ENCODE measurements at regions of chr1 and their contacts with region 1.

Region 1: DNA sequence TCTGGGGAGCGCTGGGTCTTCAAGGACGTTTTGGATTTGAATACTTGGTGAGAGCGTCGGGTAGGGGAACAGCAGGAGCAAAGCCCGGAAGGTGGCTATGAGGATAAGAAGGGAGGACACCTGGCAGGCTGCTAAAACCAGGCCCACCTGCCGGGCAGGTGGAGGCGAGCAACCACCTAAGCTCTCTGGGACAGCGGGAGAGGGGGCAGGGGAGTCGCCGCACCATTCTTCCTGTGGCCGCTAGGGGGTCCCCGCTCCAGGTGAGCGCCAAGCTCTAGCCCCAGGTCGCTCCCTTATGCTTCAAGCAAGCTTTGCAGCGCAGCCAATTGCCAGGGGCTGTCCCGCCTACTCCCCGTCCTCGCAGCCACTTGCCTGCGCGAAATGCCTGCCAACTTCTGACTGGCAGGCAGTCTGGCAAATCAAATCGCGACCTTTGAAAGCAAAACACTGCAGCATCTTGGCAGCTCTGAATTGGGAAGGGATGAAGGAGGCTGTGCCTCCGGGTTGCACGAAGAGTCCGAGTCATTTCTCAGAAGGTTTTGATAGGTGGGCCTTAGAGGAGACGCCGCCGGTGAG is at the start of gene NIPAL3:
- DNase-seq: peak; percentile 99
- H3K4me3 Mint-ChIP-seq: peak within 1 kb of the TSS; percentile 98
- H3K27ac Mint-ChIP-seq: peak within 1 kb of the TSS; percentile 77
- H3K4me1 Mint-ChIP-seq: peaks cover 61% of the 10 kb centered on the region
- H3K27me3 Mint-ChIP-seq: no peaks in the 10 kb centered on the region
- total RNA-seq, gene NIPAL3: 51.8 to 53.5 TPM

Region 2: DNA sequence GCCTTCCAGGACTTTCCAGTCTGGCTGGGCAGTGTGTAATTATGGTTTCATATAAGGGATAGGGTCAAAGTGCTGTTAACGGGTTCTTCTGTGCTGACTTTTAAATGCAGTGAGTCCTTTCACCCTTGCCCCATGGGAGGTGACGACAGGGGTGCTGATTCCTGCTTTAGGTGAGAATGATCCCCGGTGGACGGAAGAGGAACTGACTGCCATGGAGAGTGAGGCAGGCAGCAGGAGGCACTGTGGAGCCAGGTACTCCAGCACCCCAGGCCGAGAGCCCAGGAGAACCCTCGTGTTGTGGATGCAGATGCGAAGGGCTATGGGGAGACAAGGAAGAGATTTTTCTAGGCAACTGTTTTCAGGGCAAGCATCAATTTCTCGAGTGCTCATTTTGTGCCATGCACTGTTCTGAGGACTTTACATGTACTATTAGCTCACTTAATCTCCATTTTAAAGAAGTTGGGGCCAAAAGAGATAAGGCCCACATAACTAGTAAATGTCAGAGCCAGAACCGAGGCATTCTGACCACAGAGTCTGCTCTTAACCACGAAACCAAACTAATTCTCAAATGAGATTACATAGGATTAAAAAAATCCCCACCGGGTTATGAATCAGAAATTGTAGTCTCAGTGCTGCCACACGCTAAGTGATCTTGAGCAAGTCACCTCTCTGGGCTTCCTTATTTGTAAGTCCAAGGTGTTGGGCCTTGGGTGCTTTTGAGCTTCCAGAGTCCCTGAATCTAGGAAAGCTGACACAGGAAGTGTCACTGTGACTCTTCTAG is 30.1 kb before region 1 on chr1:
- CTCF ChIA-PET with region 1: interaction called, 50 read pairs
- POLR2A ChIA-PET with region 1: no interaction called
- DNase-seq: peak; percentile 49
- H3K4me3 Mint-ChIP-seq: no peak overlapping the region
- H3K27ac Mint-ChIP-seq: peak overlapping the region; percentile 82
- H3K4me1 Mint-ChIP-seq: peaks cover 36% of the 10 kb centered on the region
- H3K27me3 Mint-ChIP-seq: no peaks in the 10 kb centered on the region

Region 3: DNA sequence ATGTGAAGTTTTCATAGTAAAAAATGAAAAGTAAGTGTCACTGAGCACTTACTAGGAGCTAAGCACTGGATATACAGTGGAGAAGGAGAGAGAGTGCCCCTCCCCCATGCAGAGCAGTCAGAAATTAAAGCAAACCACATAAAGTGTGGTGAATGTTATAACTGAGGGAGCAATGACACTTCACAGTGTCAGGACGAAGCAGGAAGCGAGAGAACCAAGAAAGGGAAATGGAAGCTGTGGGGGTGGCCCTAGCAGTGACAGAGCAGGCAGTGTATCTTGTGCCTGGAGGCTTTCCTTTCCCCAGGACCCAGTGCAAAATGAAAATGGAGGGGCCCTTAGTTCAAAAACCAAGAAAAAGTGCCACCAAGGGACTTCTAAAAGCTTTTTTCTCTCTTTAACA is 65.7 kb after region 1 on chr1:
- CTCF ChIA-PET with region 1: interaction called, 19 read pairs
- POLR2A ChIA-PET with region 1: interaction called, 95 read pairs
- DNase-seq: peak; percentile 65
- H3K4me3 Mint-ChIP-seq: peak overlapping the region; percentile 27
- H3K27ac Mint-ChIP-seq: peak overlapping the region; percentile 99
- H3K4me1 Mint-ChIP-seq: peaks cover 50% of the 10 kb centered on the region
- H3K27me3 Mint-ChIP-seq: no peaks in the 10 kb centered on the region

Region 4: DNA sequence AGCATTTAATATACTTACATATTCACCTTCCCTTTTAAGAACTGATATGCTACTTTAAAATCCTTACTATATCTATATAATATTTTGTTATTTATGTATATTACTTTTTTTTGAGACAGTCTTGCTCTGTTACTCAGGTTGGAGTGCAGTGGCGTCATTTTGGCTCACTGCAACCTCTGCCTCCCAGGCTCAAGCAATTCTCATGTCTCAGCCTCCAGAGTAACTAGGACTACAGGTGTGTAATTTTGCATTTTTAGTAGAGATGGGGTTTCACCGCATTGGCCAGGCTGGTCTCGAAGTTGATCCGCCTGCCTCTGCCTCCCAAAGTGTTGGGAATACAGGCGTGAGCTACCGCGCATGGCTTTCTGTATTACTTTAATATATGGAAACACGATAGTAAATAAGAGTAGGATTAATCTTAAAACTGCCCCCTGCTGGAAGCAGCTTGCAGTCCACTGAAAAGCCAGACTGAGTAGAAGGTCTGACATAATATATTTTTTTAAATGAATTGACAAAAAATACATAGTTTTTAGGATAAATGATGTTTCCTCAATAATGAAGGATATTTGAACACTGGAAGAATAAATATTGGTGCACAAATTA is 111.6 kb after region 1 on chr1:
- CTCF ChIA-PET with region 1: interaction called, 77 read pairs
- POLR2A ChIA-PET with region 1: interaction called, 21 read pairs
- DNase-seq: peak; percentile 57
- H3K4me3 Mint-ChIP-seq: no peak overlapping the region
- H3K27ac Mint-ChIP-seq: peak overlapping the region; percentile 14
- H3K4me1 Mint-ChIP-seq: peaks cover 25% of the 10 kb centered on the region
- H3K27me3 Mint-ChIP-seq: no peaks in the 10 kb centered on the region

Region 5: GRCh38 chr1:24586970-24587820 is 171.8 kb after region 1 on chr1:
- CTCF ChIA-PET with region 1: interaction called, 37 read pairs
- POLR2A ChIA-PET with region 1: interaction called, 9 read pairs
- DNase-seq: peak; percentile 54
- H3K4me3 Mint-ChIP-seq: no peak overlapping the region
- H3K27ac Mint-ChIP-seq: no peak overlapping the region
- H3K4me1 Mint-ChIP-seq: peaks cover 8% of the 10 kb centered on the region
- H3K27me3 Mint-ChIP-seq: peaks cover 8% of the 10 kb centered on the region

Region 6: DNA sequence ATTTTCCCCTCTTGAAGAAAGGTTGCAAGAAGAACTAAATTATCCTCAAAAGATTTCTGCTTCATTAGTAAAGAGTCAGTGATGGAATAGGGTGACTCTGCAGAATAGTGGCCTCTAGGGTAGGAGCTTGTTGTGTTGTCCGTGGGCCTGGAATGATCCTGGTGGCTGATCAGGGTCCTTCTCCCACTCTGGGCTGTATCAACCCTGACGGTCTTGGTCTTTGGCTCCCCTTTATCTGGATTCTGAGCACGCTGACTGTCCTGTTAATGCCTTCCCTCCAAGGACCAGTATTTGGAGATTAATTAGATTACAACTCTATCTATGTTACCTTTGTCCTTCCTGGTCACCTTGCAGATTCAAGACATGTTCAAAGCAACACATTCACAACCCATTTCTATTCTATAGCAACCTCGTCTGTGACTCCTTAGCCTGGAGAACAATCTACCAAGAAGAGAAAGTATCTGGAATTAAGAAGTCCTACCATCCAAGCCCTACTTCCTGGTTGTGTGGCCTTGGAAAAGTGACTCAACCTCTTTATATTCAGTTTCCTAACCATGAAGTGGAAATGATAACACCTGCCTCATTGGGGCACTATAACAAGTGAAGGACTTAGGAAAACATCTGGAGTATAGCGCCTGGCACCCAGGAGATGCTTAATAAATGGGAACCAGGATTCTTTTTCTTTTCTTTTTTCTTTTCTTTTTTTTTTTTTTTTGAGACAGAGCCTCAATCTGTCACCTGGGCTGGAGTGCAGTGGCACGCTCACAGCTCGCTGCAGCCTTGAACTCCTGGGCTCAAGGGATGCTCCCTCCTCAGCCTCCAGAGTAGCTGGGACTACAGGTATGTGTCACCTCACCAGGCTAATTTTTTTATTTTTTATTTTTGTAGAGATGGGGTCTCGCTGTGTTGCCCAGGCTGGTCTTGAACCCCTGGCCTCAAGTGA is 191.1 kb after region 1 on chr1:
- CTCF ChIA-PET with region 1: no interaction called
- POLR2A ChIA-PET with region 1: no interaction called
- DNase-seq: no peak
- H3K4me3 Mint-ChIP-seq: no peak overlapping the region
- H3K27ac Mint-ChIP-seq: no peak overlapping the region
- H3K4me1 Mint-ChIP-seq: no peaks in the 10 kb centered on the region
- H3K27me3 Mint-ChIP-seq: peaks cover 7% of the 10 kb centered on the region